Activated naive CD4-positive, alpha-beta T cell treated with anti-CD3 and anti-CD28 coated beads for 36 hours (primary cell): ENCODE measurements at regions of chr3 and their contacts with region 1.

Region 1: DNA sequence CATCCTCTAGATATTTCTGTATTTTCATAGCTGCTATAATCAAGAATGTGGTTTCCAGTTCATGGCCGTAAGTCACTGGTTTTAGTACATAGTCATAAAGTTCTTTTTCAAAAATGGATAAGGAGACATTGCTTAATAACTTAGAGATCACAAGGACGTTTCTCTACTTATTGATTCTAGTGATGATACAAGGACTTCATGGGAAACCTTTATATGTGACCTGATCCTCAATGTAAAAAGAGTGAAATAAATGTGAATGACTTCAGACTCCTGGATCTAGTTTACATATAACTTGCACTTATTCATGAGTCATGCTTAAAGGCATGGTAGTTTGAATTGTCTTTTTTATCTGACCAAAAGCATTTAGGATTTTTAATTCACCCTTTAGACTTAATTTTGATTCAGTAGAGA is 35.2 kb downstream of the TSC22D2 start:
- DNase-seq: no peak
- H3K4me3 Mint-ChIP-seq: no peak overlapping the region
- H3K27ac Mint-ChIP-seq: no peak overlapping the region
- H3K4me1 Mint-ChIP-seq: peaks cover 28% of the 10 kb centered on the region
- H3K27me3 Mint-ChIP-seq: no peaks in the 10 kb centered on the region

Region 2: GRCh38 chr3:150488867-150489266 is 45.5 kb after region 1 on chr3:
- CTCF ChIA-PET with region 1: no interaction called
- intact Hi-C with region 1: loop called (anchors 5 kb)
- DNase-seq: no peak
- H3K4me3 Mint-ChIP-seq: no peak overlapping the region
- H3K27ac Mint-ChIP-seq: no peak overlapping the region
- H3K4me1 Mint-ChIP-seq: no peaks in the 10 kb centered on the region
- H3K27me3 Mint-ChIP-seq: no peaks in the 10 kb centered on the region